ENCODE measurements at regions of chr9 and their contacts with region 1.

Region 1: GRCh38 chr9:117480253-117480652 is 65.4 kb upstream of the ASTN2 start:
- DNase-seq: no peak
- H3K4me3 ChIP-seq: no peak overlapping the region
- H3K27ac ChIP-seq: no peak overlapping the region
- H3K4me1 ChIP-seq: no peaks in the 10 kb centered on the region
- H3K27me3 ChIP-seq: no peaks in the 10 kb centered on the region
- CTCF ChIP-seq: no peak
- POLR2A ChIP-seq: no peak

Region 2: GRCh38 chr9:116959809-116960208 is 520.4 kb before region 1 on chr9:
- intact Hi-C with region 1: no loop called
- DNase-seq: no peak
- H3K4me3 ChIP-seq: no peak overlapping the region
- H3K27ac ChIP-seq: no peak overlapping the region
- H3K4me1 ChIP-seq: no peaks in the 10 kb centered on the region
- H3K27me3 ChIP-seq: no peaks in the 10 kb centered on the region
- CTCF ChIP-seq: no peak
- POLR2A ChIP-seq: no peak

Region 3: GRCh38 chr9:117403403-117403811 is 76.8 kb before region 1 on chr9:
- intact Hi-C with region 1: loop called (anchors 2 kb)
- DNase-seq: no peak
- H3K4me3 ChIP-seq: peak overlapping the region in 1 of 3 donors; percentile 13
- H3K27ac ChIP-seq: no peak overlapping the region
- H3K4me1 ChIP-seq: no peaks in the 10 kb centered on the region
- H3K27me3 ChIP-seq: no peaks in the 10 kb centered on the region
- CTCF ChIP-seq: no peak
- POLR2A ChIP-seq: no peak

Region 4: GRCh38 chr9:118209343-118209742 is 729.1 kb after region 1 on chr9:
- intact Hi-C with region 1: no loop called
- DNase-seq: no peak
- H3K4me3 ChIP-seq: no peak overlapping the region
- H3K27ac ChIP-seq: no peak overlapping the region
- H3K4me1 ChIP-seq: no peaks in the 10 kb centered on the region
- H3K27me3 ChIP-seq: no peaks in the 10 kb centered on the region
- CTCF ChIP-seq: no peak
- POLR2A ChIP-seq: no peak